Keratinocyte (primary cell): ENCODE measurements at regions of chr11 and their contacts with region 1.

Region 1: DNA sequence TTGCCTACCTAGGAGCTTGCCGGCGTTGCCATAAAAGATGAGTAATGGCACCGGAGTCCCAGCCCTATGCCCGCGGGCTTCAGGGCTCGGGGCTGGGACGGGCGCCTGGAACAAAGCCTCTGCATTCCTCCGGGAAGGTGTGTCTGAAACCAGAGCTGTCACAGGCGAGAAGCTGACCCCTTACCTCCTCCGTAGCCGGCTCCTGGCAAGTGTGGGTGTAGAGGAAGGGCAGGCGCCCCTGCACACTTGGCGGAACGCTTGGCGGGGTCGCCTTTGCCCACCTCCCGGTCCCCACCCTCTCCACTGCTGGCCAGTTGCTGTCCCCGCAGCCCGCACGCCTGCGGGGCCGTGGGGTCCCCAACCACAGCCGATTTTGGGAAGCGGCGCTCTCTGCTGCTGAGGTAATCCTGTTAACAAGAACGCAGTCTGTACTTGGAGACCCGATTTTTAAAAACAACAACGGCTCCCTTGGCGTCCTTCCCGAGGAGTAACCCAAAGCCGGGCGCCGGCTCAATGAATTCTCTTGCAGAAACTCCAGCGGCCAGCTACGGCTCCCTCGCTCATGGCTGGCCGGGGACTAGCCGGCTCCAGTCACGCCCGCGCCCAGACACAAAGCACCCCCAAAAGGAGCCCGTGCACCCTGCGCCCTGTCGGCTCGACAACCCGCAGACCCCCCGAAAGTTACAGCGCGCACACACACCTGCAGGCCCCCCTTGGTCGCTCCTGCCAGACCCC is 89.2 kb downstream of the PLEKHA7 start:
- DNase-seq: peak; percentile 63
- H3K4me3 ChIP-seq: peak overlapping the region; percentile 51 to 72 (median 66)
- H3K27ac ChIP-seq: no peak overlapping the region
- H3K4me1 ChIP-seq: peaks cover 16% of the 10 kb centered on the region
- H3K27me3 ChIP-seq: peaks cover 14% of the 10 kb centered on the region
- CTCF ChIP-seq: no peak

Region 2: GRCh38 chr11:16820324-16821092 is 104.5 kb before region 1 on chr11:
- dilution Hi-C with region 1: loop called (anchors 25 kb)
- DNase-seq: peak; percentile 42
- H3K4me3 ChIP-seq: no peak overlapping the region
- H3K27ac ChIP-seq: no peak overlapping the region
- H3K4me1 ChIP-seq: no peaks in the 10 kb centered on the region
- H3K27me3 ChIP-seq: no peaks in the 10 kb centered on the region
- CTCF ChIP-seq: peak; percentile 84 to 93 (median 85)